ENCODE measurements at regions of chr7 and their contacts with region 1.

Region 1: GRCh38 chr7:138278601-138279000 is 181.5 kb upstream of the TRIM24 start:
- DNase-seq: no peak
- ATAC-seq: no peak
- H3K4me3 ChIP-seq: no peak overlapping the region
- H3K27ac ChIP-seq: no peak overlapping the region
- H3K4me1 ChIP-seq: no peaks in the 10 kb centered on the region
- H3K27me3 ChIP-seq: no peaks in the 10 kb centered on the region
- CTCF ChIP-seq: no peak

Region 2: GRCh38 chr7:138212133-138212713 is 66.4 kb before region 1 on chr7:
- intact Hi-C with region 1: loop called in 1 of 10 experiments (anchors 10 kb)
- DNase-seq: no peak
- ATAC-seq: no peak
- H3K4me3 ChIP-seq: no peak overlapping the region
- H3K27ac ChIP-seq: no peak overlapping the region
- H3K4me1 ChIP-seq: no peaks in the 10 kb centered on the region
- H3K27me3 ChIP-seq: no peaks in the 10 kb centered on the region
- CTCF ChIP-seq: no peak

Measured in heart right ventricle (tissue), 16 donors.